ENCODE measurements at regions of chr9 and their contacts with region 1.

Region 1: DNA sequence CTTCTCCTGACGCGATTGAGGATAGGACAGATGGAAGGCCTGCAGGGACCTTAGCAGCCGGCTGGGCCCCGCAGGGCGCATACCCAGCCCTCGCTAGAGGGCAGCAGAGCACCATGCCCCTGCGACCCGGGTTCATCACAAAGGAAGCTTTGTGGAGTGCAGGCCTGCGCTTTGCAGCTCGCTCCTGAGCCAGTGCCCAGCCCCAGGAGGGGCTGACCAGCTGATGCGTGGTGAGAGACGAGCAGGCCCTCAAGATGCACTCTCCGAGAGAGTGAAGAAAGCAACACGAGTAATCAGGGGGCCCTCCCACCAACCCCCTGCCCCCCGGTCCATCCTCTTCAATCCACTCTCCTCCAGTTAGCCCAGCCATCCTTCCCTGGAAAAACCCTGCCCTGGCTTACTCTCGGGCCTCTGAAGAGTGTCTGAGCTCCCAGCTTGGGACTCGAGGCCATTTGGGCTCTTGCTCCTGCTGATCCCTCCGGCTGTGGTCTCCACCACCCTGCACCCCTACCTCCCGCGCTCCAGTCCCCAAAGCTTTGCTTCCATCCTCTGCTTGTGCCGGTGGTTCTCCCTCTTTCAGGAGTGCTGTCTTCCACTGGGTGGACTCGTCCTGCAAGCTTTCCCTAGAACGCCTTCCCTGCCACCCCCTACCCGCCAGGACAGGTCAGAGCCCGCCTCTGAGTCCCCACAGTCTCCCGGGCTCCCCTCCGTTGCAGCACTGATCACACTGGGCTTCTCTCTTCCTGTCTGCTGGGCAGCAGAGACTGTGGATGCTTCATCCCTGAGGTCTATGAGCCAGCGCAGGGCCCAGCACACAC is 9.1 kb upstream of the KIF12 start:
- DNase-seq: no peak
- H3K4me3 ChIP-seq: no peak overlapping the region
- CTCF ChIP-seq: peak; percentile 97

Region 2: GRCh38 chr9:113913426-113914195 is 194.6 kb before region 1 on chr9:
- CTCF ChIA-PET with region 1: no interaction called
- POLR2A ChIA-PET with region 1: no interaction called
- DNase-seq: no peak
- H3K4me3 ChIP-seq: no peak overlapping the region
- CTCF ChIP-seq: no peak

Region 3: DNA sequence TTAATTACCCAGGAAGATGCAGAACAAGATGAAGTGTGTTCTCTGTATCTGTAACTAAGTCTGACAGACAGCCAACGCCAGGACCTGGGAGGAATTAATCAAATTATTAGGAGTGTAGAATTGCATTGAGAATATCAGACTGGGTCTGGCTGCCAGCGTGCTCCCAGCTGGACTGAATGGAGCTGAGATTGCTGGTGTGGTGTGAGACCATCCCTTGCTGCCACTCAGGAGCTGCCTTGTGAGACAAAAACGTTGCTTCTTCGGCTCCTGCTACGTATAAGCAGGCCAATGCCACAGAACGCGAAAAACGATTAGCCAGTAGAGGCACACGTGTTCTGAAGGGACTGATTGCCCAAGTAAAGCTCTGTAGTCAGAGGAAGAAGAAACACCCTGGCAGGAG is 96.9 kb before region 1 on chr9:
- CTCF ChIA-PET with region 1: no interaction called
- POLR2A ChIA-PET with region 1: no interaction called
- DNase-seq: no peak
- H3K4me3 ChIP-seq: no peak overlapping the region
- CTCF ChIP-seq: no peak

Region 4: GRCh38 chr9:114082017-114082762 is 26.0 kb before region 1 on chr9:
- CTCF ChIA-PET with region 1: interaction called, 85 read pairs
- POLR2A ChIA-PET with region 1: no interaction called
- DNase-seq: peak; percentile 41
- H3K4me3 ChIP-seq: no peak overlapping the region
- CTCF ChIP-seq: peak; percentile 85

Region 5: GRCh38 chr9:114141553-114142402 is 33.6 kb after region 1 on chr9:
- CTCF ChIA-PET with region 1: interaction called, 26 read pairs
- POLR2A ChIA-PET with region 1: no interaction called
- DNase-seq: no peak
- H3K4me3 ChIP-seq: no peak overlapping the region
- CTCF ChIP-seq: no peak

Region 6: GRCh38 chr9:114169029-114169951 is 61.1 kb after region 1 on chr9:
- CTCF ChIA-PET with region 1: interaction called, 11 read pairs
- POLR2A ChIA-PET with region 1: no interaction called
- DNase-seq: no peak
- H3K4me3 ChIP-seq: no peak overlapping the region
- CTCF ChIP-seq: no peak

Region 7: GRCh38 chr9:114238891-114239875 is 131.0 kb after region 1 on chr9:
- CTCF ChIA-PET with region 1: interaction called, 28 read pairs
- POLR2A ChIA-PET with region 1: no interaction called
- DNase-seq: no peak
- H3K4me3 ChIP-seq: no peak overlapping the region
- CTCF ChIP-seq: peak; percentile 61

Region 8: DNA sequence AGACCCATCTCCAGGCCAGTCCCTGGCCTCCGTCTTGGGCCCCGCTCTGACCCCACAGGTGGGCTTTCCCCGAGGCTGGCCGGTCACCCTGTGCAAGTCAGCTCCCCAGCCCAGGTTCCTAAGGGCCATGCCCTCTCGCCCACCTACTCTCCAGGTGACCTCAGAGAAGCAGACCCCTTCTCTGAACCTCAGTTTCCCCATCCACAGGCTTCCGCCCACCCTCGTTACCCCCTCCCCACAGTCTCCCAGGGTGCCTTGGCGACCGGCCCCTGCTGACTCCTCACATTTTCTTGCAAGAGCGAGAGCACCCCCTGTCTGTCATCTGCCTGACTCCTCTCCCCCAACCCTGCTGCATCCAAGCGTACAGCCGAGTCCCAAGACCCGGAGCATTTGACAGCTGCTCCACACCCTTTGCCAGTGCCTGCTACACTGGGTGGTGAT is 163.4 kb after region 1 on chr9:
- CTCF ChIA-PET with region 1: interaction called, 90 read pairs
- POLR2A ChIA-PET with region 1: no interaction called
- DNase-seq: no peak
- H3K4me3 ChIP-seq: no peak overlapping the region
- CTCF ChIP-seq: peak; percentile 48

Region 9: GRCh38 chr9:114385412-114386181 is 277.4 kb after region 1 on chr9:
- CTCF ChIA-PET with region 1: interaction called, 10 read pairs
- POLR2A ChIA-PET with region 1: no interaction called
- DNase-seq: no peak
- H3K4me3 ChIP-seq: peak overlapping the region; percentile 35
- CTCF ChIP-seq: no peak